Activated T-helper 1 cell treated with anti-CD3 and anti-CD28 coated beads, Interleukin-12 subunit alpha, Interleukin-12 subunit beta, Interleukin-2, Interleukin-4 antibody, amounts not matched to agents 30 ng/mL and 10 ng/mL and 1 ng/mL, durations not matched to agents 14 hours and 24 hours and 36 hours (primary cell): ENCODE measurements at regions of chr3 and their contacts with region 1.

Region 1: GRCh38 chr3:16842272-16843270 is 42.2 kb upstream of the PLCL2 start:
- DNase-seq: peak; percentile 73
- H3K4me3 Mint-ChIP-seq: peak overlapping the region; percentile 77
- H3K27ac Mint-ChIP-seq: peak overlapping the region; percentile 99
- H3K4me1 Mint-ChIP-seq: peaks cover 71% of the 10 kb centered on the region
- H3K27me3 Mint-ChIP-seq: peaks cover 3% of the 10 kb centered on the region

Region 2: DNA sequence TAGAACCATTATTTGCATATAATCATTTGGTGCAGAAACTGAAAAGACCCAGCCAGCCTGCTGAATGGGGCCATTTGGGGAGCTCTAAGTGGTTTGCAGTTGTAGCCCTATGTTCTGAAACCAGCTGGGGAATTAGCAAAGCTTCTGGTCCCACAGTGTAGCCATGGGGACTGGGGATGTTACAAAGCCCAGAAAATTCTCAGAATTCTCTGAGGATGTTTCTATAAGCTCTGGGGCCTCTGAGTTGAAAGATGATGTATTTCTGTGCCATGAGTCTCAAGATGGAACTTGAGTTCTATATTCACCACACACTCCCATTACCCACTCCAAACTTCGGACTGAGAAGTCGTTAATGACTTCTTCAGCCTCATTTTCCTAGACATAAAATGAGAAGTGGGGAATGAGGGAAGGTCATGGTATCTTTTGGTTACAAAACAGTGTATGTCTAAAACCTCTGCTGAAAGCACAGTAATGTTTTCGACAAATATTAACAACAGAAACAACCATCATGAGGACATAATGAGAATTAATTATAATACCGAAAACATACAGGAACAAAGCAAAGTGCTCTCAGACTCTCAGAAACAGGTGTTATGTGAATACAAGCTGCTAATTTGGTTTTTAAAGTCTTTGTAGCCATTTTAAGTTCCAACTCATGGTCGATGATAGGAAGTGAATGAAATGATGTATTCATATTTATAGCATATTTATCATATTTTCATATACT is 418.5 kb before region 1 on chr3:
- intact Hi-C with region 1: no loop called
- DNase-seq: no peak
- H3K4me3 Mint-ChIP-seq: no peak overlapping the region
- H3K27ac Mint-ChIP-seq: no peak overlapping the region
- H3K4me1 Mint-ChIP-seq: peaks cover 19% of the 10 kb centered on the region
- H3K27me3 Mint-ChIP-seq: no peaks in the 10 kb centered on the region

Region 3: DNA sequence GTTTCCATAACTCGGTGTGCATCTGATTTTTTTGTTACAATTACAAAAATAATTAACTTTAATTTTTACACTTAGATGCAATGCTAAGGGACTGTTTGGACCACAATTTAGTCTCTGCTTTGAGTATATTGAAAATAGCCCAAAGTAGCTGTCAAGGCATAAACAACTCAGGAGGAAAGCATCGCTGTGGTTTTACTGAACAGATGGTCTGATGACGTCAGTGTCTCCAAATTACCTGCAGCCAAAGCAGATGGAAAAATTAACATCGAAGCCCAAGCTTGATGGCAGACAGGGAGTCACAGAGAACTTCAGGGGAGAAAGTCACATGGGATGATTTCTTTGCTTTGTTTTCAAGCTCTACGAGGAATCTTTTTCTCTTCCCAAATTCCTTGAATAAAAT is 40.9 kb before region 1 on chr3:
- intact Hi-C with region 1: loop called (anchors 2 kb)
- DNase-seq: no peak
- H3K4me3 Mint-ChIP-seq: no peak overlapping the region
- H3K27ac Mint-ChIP-seq: peak overlapping the region; percentile 15
- H3K4me1 Mint-ChIP-seq: peaks cover 35% of the 10 kb centered on the region
- H3K27me3 Mint-ChIP-seq: peaks cover 4% of the 10 kb centered on the region

Region 4: GRCh38 chr3:16828815-16829214 is 13.8 kb before region 1 on chr3:
- intact Hi-C with region 1: loop called (anchors 2 kb)
- DNase-seq: peak; percentile 22
- H3K4me3 Mint-ChIP-seq: no peak overlapping the region
- H3K27ac Mint-ChIP-seq: no peak overlapping the region
- H3K4me1 Mint-ChIP-seq: peaks cover 21% of the 10 kb centered on the region
- H3K27me3 Mint-ChIP-seq: peaks cover 17% of the 10 kb centered on the region

Region 5: GRCh38 chr3:17233398-17233800 is 390.8 kb after region 1 on chr3:
- intact Hi-C with region 1: loop called (anchors 5 kb)
- DNase-seq: peak; percentile 27
- H3K4me3 Mint-ChIP-seq: no peak overlapping the region
- H3K27ac Mint-ChIP-seq: no peak overlapping the region
- H3K4me1 Mint-ChIP-seq: peaks cover 13% of the 10 kb centered on the region
- H3K27me3 Mint-ChIP-seq: no peaks in the 10 kb centered on the region